PC-3 (cell line): ENCODE measurements at regions of chr9 and their contacts with region 1.

Region 1: DNA sequence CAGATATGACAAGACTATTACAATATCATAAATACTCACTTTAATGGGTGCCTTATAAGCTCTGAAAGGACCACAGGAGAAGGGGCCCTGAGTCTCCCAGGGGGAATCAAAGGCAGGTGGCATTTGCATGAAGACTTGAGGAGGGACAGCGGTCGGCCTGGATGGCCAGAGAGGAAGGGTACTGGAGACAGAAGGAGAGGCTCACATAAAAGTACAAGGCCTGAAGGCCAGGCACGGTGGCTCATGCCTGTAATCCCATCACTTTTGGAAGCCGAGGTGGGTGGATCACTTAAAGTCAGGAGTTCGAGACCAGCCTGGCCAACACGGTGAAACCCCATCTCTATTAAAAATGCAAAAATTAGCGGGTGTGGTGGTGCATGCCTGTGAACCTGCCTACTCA is 29.1 kb upstream of the LMX1B start:
- DNase-seq: no peak
- ATAC-seq: no peak
- H3K4me3 ChIP-seq: no peak overlapping the region
- H3K27ac ChIP-seq: no peak overlapping the region
- H3K4me1 ChIP-seq: no peaks in the 10 kb centered on the region
- H3K27me3 ChIP-seq: peaks cover 8% of the 10 kb centered on the region; the same call in 1 of the 2 replicates
- CTCF ChIP-seq: no peak

Region 2: DNA sequence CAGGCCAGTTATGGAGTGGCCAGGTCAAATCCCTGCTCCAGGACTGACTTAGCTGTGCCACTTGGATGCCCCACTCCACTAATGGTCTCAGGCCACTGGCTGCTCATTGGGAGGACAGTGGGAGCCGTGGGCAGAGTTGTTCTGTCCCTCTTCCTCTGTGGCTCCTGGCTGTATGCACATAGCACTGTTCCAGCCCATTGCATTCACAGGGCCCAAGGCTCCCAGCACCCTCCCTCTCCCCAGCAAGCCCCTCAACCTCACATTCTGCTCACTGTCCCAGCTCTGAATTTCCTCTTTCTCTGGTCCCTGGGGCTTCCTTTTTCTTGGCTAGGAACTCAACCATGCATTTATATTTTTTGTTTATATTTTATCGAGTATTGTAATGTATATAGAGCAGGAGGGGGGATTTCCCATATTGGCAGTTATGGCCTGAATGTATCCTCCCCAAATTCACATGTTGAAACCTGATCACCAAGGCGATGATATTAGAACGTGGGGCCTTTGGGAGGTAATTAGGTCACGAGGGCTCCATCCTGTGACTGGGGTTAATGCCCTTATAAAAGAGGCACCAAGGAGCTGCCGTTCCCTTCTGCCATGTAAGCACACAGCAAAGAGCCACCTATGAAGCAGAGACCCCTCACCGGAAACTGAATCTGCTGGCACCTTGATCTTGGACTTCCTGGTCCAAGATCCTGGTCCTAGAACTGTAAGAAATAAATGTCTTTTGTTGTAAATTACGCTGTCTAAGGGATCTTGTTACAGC is 275.0 kb before region 1 on chr9:
- CTCF ChIA-PET with region 1: no interaction called
- POLR2A ChIA-PET with region 1: interaction called, 11 read pairs
- intact Hi-C with region 1: no loop called
- DNase-seq: no peak
- ATAC-seq: no peak
- H3K4me3 ChIP-seq: no peak overlapping the region
- H3K27ac ChIP-seq: no peak overlapping the region
- H3K4me1 ChIP-seq: no peaks in the 10 kb centered on the region
- H3K27me3 ChIP-seq: no peaks in the 10 kb centered on the region
- CTCF ChIP-seq: no peak

Region 3: DNA sequence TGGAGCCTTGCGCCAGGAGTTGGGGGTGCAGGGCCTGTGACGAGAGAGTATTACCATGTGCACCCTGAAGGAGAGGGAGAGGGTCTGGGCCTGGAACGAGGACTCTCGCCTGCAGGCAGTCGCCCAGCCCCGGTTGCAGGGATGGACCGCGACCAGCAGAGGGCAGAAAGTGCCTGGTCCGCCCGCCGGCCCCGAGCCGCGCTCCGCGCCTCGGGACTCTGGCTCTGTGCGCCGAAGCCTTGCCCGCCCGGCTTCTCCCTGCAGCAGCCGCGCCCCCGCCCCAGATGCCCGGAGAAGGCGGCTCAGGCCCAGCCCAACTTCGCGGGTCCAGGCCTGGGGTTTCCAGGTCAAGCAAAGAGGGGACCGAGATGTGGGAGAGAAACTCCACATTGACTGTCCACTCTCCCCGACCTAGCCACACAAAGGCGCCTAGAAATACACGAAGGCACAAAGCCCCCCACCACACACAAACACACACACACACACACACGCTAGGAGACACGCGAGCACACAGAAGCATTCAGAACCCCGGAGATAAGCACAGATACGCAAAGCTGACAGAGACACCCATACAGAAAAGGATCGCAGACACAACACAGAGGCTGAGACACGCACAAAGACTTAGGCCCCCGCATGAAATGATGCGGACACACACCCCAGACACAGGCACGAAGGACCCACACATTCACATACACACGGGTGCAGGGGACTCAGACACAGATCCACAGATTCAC is 27.1 kb after region 1 on chr9:
- CTCF ChIA-PET with region 1: interaction called, 13 read pairs
- POLR2A ChIA-PET with region 1: no interaction called
- intact Hi-C with region 1: no loop called
- DNase-seq: peak; percentile 69
- ATAC-seq: peak; percentile 79
- H3K4me3 ChIP-seq: peak overlapping the region; percentile 59
- H3K27ac ChIP-seq: no peak overlapping the region
- H3K4me1 ChIP-seq: 0 out of 2 replicates have a peak, but pooled peaks cover 5% of the 10 kb centered on the region
- H3K27me3 ChIP-seq: peaks cover 35% of the 10 kb centered on the region
- CTCF ChIP-seq: peak; percentile 62

Region 4: DNA sequence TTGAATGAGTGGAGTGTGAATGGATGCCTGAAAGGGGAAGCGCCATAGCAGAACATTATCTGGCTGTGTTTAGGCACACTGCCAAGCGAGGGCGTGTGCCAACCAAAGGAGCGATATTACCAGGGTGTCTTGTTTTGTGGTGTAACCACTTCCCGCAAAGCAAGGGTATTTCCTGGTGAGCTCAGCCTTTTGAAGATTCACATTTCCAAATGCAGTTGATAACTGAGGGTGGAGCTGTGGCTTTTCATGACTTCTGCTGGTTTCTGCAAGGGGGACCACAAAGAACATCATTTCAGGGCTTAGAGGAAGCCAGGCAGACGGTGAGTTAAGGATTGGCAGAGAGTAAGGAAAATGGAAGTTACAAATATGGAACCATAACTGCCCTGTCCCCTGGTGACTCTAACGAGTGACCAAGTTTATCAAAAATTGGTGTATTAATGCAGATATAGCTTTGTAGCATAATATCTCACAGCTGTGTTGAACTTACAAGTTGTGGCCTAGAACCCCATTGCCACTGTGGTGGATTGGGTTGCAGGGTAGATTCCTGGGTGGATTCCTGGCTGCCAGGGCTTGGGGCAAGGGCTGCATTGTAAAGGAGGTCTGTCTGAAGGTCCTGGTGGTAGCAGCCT is 401.4 kb after region 1 on chr9:
- CTCF ChIA-PET with region 1: no interaction called
- POLR2A ChIA-PET with region 1: no interaction called
- intact Hi-C with region 1: no loop called
- DNase-seq: peak; percentile 97
- ATAC-seq: peak; percentile 70
- H3K4me3 ChIP-seq: peak overlapping the region; percentile 53
- H3K27ac ChIP-seq: peak overlapping the region; percentile 98
- H3K4me1 ChIP-seq: peaks cover 41% of the 10 kb centered on the region
- H3K27me3 ChIP-seq: no peaks in the 10 kb centered on the region
- CTCF ChIP-seq: 0 out of 2 replicates have a peak, but pooled peaks have one; percentile 23